Activated CD4-positive, alpha-beta memory T cell treated with anti-CD3 and anti-CD28 coated beads for 36 hours (primary cell): ENCODE measurements at regions of chr1 and their contacts with region 1.

Region 1: GRCh38 chr1:100955322-100955721 is 59.4 kb downstream of the SLC30A7 start:
- DNase-seq: no peak
- H3K4me3 Mint-ChIP-seq: no peak overlapping the region
- H3K27ac Mint-ChIP-seq: peak overlapping the region; percentile 56
- H3K4me1 Mint-ChIP-seq: peaks cover 48% of the 10 kb centered on the region
- H3K27me3 Mint-ChIP-seq: no peaks in the 10 kb centered on the region

Region 2: GRCh38 chr1:100730130-100730529 is 225.2 kb before region 1 on chr1:
- CTCF ChIA-PET with region 1: no interaction called
- POLR2A ChIA-PET with region 1: no interaction called
- intact Hi-C with region 1: no loop called
- DNase-seq: no peak
- H3K4me3 Mint-ChIP-seq: no peak overlapping the region
- H3K27ac Mint-ChIP-seq: no peak overlapping the region
- H3K4me1 Mint-ChIP-seq: no peaks in the 10 kb centered on the region
- H3K27me3 Mint-ChIP-seq: peaks cover 10% of the 10 kb centered on the region

Region 3: GRCh38 chr1:100941098-100941527 is 14.2 kb before region 1 on chr1:
- CTCF ChIA-PET with region 1: interaction called, 3 read pairs
- POLR2A ChIA-PET with region 1: interaction called, 3 read pairs
- intact Hi-C with region 1: loop called (anchors 1 kb)
- DNase-seq: peak; percentile 67
- H3K4me3 Mint-ChIP-seq: peak overlapping the region; percentile 77
- H3K27ac Mint-ChIP-seq: peak overlapping the region; percentile 92
- H3K4me1 Mint-ChIP-seq: peaks cover 39% of the 10 kb centered on the region
- H3K27me3 Mint-ChIP-seq: peaks cover 3% of the 10 kb centered on the region

Region 4: GRCh38 chr1:100969327-100969726 is 14.0 kb after region 1 on chr1:
- CTCF ChIA-PET with region 1: no interaction called
- POLR2A ChIA-PET with region 1: no interaction called
- intact Hi-C with region 1: no loop called
- DNase-seq: no peak
- H3K4me3 Mint-ChIP-seq: no peak overlapping the region
- H3K27ac Mint-ChIP-seq: no peak overlapping the region
- H3K4me1 Mint-ChIP-seq: peaks cover 30% of the 10 kb centered on the region
- H3K27me3 Mint-ChIP-seq: no peaks in the 10 kb centered on the region

Region 5: GRCh38 chr1:100979631-100980030 is 24.3 kb after region 1 on chr1:
- CTCF ChIA-PET with region 1: no interaction called
- POLR2A ChIA-PET with region 1: no interaction called
- intact Hi-C with region 1: no loop called
- DNase-seq: no peak
- H3K4me3 Mint-ChIP-seq: no peak overlapping the region
- H3K27ac Mint-ChIP-seq: no peak overlapping the region
- H3K4me1 Mint-ChIP-seq: peaks cover 7% of the 10 kb centered on the region
- H3K27me3 Mint-ChIP-seq: no peaks in the 10 kb centered on the region

Region 6: GRCh38 chr1:101004670-101005069 is 49.3 kb after region 1 on chr1:
- CTCF ChIA-PET with region 1: no interaction called
- POLR2A ChIA-PET with region 1: no interaction called
- intact Hi-C with region 1: loop called (anchors 2 kb)
- DNase-seq: no peak
- H3K4me3 Mint-ChIP-seq: no peak overlapping the region
- H3K27ac Mint-ChIP-seq: no peak overlapping the region
- H3K4me1 Mint-ChIP-seq: peaks cover 56% of the 10 kb centered on the region
- H3K27me3 Mint-ChIP-seq: no peaks in the 10 kb centered on the region